ENCODE measurements at regions of chr2 and their contacts with region 1.

Region 1: GRCh38 chr2:106085181-106085940 is 108.7 kb downstream of the UXS1 start:
- DNase-seq: peak; percentile 84
- H3K4me3 Mint-ChIP-seq: peak overlapping the region; percentile 72
- H3K27ac Mint-ChIP-seq: peak overlapping the region; percentile 94
- H3K4me1 Mint-ChIP-seq: peaks cover 65% of the 10 kb centered on the region
- H3K27me3 Mint-ChIP-seq: no peaks in the 10 kb centered on the region

Region 2: GRCh38 chr2:105576440-105577252 is 508.7 kb before region 1 on chr2:
- CTCF ChIA-PET with region 1: interaction called, 21 read pairs
- intact Hi-C with region 1: loop called (anchors 1 kb)
- DNase-seq: no peak
- H3K4me3 Mint-ChIP-seq: no peak overlapping the region
- H3K27ac Mint-ChIP-seq: peak overlapping the region; percentile 71
- H3K4me1 Mint-ChIP-seq: peaks cover 16% of the 10 kb centered on the region
- H3K27me3 Mint-ChIP-seq: no peaks in the 10 kb centered on the region

Region 3: GRCh38 chr2:105604938-105605337 is 480.4 kb before region 1 on chr2:
- CTCF ChIA-PET with region 1: no interaction called
- intact Hi-C with region 1: no loop called
- DNase-seq: no peak
- H3K4me3 Mint-ChIP-seq: no peak overlapping the region
- H3K27ac Mint-ChIP-seq: no peak overlapping the region
- H3K4me1 Mint-ChIP-seq: no peaks in the 10 kb centered on the region
- H3K27me3 Mint-ChIP-seq: no peaks in the 10 kb centered on the region

Region 4: DNA sequence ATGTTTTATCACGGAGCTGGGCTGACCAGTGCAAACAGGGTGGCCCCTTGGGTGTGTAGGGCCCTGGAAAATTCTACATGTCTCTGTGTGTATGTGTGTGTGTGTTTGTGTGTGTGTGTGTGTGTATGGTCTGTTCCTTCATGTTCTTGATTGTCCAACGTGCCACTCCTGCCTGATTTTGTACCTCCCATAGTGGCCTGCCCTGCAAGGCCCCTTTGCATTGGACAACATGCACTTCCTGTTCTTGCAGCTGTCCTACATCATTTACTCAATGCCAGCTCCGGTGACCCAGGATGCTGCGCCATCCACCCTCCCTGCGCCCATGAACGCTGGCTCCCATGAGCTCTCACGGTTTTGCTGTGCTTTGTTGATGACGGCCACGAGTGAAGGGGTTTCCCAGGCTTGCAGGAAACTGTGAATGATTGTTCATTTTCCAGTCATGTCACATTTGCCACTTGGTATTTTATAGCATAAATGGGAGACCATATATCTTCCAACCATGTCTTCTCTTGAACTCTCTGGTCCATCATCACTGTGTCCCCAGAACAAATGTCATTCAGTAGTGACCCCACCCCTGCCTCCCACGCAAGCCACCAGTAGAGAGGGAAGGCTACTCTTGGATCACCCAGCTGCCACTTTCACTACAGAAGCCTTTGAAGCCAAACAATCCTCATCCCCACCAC is 410.4 kb before region 1 on chr2:
- CTCF ChIA-PET with region 1: no interaction called
- intact Hi-C with region 1: loop called (anchors 5 kb)
- DNase-seq: peak; percentile 79
- H3K4me3 Mint-ChIP-seq: no peak overlapping the region
- H3K27ac Mint-ChIP-seq: peak overlapping the region; percentile 86
- H3K4me1 Mint-ChIP-seq: peaks cover 19% of the 10 kb centered on the region
- H3K27me3 Mint-ChIP-seq: no peaks in the 10 kb centered on the region

Region 5: DNA sequence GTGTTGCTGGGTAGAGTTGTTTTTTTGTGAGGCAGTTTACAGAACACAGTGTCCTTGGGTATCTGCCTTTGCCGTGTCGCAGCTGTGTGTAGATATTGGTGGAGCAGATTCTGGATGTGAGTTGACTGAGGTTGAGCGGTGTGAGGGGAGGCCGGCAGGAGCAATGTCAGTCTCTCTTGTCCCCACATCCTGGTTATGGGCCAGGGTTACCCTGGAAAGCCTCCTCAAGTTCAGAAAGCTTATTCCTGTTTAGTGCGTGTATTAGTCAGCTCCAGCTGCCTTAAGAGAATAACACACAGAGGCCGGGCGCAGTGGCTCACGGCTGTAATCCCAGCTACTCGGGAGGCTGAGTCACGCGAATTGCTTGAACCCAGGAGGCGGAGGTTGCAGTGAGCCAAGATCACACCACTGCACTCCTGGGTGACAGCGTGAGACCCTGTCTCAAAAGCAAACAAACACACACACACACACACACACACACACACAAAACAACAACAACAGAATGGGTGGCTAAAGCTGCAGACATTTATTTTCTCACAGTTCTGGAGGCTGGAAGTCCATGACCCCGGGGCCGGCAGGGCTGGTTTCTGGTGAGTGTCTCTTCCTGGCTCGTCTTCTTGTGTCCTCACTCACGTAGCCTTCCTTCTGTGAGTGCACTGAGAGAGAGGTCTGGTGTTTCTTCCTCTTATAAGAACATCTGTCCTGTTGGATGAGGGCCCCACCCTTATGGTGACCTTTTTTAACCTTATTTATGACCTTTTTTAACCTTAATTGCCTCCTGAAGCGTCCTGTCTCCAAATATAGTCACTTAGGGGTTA is 335.6 kb before region 1 on chr2:
- CTCF ChIA-PET with region 1: no interaction called
- intact Hi-C with region 1: loop called (anchors 1 kb)
- DNase-seq: peak; percentile 71
- H3K4me3 Mint-ChIP-seq: peak overlapping the region; percentile 65
- H3K27ac Mint-ChIP-seq: peak overlapping the region; percentile 96
- H3K4me1 Mint-ChIP-seq: peaks cover 77% of the 10 kb centered on the region
- H3K27me3 Mint-ChIP-seq: no peaks in the 10 kb centered on the region

Region 6: GRCh38 chr2:105802587-105802986 is 282.8 kb before region 1 on chr2:
- CTCF ChIA-PET with region 1: no interaction called
- intact Hi-C with region 1: loop called (anchors 1 kb)
- DNase-seq: peak; percentile 82
- H3K4me3 Mint-ChIP-seq: peak overlapping the region; percentile 8
- H3K27ac Mint-ChIP-seq: peak overlapping the region; percentile 86
- H3K4me1 Mint-ChIP-seq: peaks cover 94% of the 10 kb centered on the region
- H3K27me3 Mint-ChIP-seq: no peaks in the 10 kb centered on the region

Region 7: GRCh38 chr2:105919826-105920225 is 165.5 kb before region 1 on chr2:
- CTCF ChIA-PET with region 1: interaction called, 4 read pairs
- intact Hi-C with region 1: loop called (anchors 1 kb)
- DNase-seq: peak; percentile 71
- H3K4me3 Mint-ChIP-seq: no peak overlapping the region
- H3K27ac Mint-ChIP-seq: no peak overlapping the region
- H3K4me1 Mint-ChIP-seq: peaks cover 40% of the 10 kb centered on the region
- H3K27me3 Mint-ChIP-seq: no peaks in the 10 kb centered on the region

Region 8: GRCh38 chr2:106307860-106308259 is 222.5 kb after region 1 on chr2:
- CTCF ChIA-PET with region 1: no interaction called
- intact Hi-C with region 1: no loop called
- DNase-seq: no peak
- H3K4me3 Mint-ChIP-seq: no peak overlapping the region
- H3K27ac Mint-ChIP-seq: no peak overlapping the region
- H3K4me1 Mint-ChIP-seq: no peaks in the 10 kb centered on the region
- H3K27me3 Mint-ChIP-seq: no peaks in the 10 kb centered on the region